ENCODE measurements at regions of chr10 and their contacts with region 1.

Region 1: DNA sequence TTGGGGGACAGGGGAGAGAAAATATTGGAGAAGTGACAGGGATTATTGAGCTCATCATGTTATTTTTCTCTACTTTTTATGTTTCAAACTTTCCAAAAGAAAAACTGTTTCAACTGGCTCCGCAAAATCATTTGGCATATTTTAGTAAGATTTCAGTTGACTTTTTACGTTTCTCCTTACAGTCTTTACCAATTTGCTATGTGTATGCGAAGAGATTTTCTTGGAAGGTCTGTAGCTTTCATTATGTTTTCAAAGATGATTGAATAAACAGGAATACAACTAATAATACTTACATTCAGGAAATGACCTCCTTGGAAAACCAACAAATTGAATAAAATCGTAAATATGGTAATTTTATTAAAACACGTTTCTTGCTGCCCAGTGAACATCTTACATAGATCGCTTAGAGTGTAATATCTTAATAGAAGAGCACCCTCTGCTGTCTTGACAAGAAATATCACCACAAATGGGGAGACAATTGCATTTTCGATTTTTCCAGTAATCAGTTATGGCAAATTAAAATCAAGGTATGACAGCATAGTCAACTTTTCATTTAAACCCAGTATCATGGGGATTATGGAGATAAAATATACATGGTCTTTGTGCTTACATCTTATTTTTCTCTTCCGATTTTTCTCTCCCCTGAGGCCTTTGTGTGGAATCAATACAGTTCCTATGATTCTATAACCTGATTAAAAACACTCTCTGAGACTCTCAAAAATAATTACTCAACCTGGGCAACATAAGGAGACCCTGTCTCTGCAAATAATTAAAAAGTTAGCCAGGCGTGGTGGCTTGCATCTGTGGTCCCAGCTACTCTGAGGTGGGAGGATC is 43.1 kb downstream of the MBL2 start:
- DNase-seq: no peak
- H3K4me3 ChIP-seq: no peak overlapping the region
- H3K27ac ChIP-seq: no peak overlapping the region
- H3K4me1 ChIP-seq: no peaks in the 10 kb centered on the region
- H3K27me3 ChIP-seq: no peaks in the 10 kb centered on the region
- CTCF ChIP-seq: peak; percentile 64

Region 2: GRCh38 chr10:52644373-52645186 is 84.9 kb before region 1 on chr10:
- intact Hi-C with region 1: loop called (anchors 1 kb)
- DNase-seq: no peak
- H3K4me3 ChIP-seq: no peak overlapping the region
- H3K27ac ChIP-seq: no peak overlapping the region
- H3K4me1 ChIP-seq: peaks cover 10% of the 10 kb centered on the region
- H3K27me3 ChIP-seq: peaks cover 7% of the 10 kb centered on the region
- CTCF ChIP-seq: peak; percentile 79